Motor neuron (in vitro differentiated cells): ENCODE measurements at regions of chr9 and their contacts with region 1.

Region 1: GRCh38 chr9:110623462-110624025 is 44.0 kb upstream of the SVEP1 start:
- ATAC-seq: peak in 7 of 8 experiments; percentile 22 to 54 (median 44)
- H3K4me3 ChIP-seq: no peak overlapping the region
- H3K27ac ChIP-seq: no peak overlapping the region
- H3K4me1 ChIP-seq: peaks cover 0 to 3% of the 10 kb centered on the region in 2 donors

Region 2: DNA sequence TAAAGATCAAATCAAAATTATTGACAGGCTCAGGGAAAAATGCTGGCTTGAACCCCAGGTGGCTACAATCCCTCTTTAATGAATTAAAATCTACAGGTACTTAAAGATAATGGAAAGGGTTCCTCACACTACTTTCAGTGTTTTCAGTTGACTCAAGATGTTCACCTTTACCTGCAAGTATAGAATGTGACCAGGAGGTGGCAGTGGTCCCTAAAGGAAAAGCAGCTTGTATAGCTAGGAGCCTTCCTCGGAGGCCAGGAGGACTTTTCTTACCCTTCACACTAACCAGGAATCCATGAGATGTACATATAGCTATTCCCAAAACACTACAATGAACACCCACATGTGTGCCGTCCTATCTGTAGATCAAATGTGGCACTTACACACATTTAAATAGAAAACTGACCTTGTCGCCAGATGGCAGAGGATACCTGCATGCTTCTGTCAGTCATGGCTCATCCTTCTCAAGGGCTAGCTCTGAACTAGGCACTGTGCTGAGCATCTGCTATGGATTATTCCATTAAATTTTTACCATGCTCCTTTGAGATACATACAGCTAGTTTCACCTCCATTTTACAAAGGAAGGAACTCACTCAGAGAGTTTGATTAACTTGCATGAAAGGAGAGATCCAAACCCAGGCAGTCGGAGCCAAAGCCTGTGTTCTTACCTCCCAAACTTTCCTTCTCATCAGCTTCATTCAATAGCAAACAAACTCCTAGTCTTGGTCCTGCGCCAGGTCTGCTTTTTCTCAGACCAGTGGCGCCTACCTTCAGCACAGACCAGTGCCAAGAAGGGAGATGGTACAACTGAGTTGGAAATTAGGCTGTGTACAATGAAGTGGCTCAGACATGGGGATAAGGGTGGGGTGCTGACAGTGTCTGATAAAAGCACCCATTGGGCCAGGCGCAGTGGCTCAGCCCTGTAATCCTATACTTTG is 440.1 kb before region 1 on chr9:
- in situ Hi-C with region 1: loop called in 1 of 9 experiments (anchors 25 kb)
- ATAC-seq: peak in 6 of 8 experiments; percentile 4 to 78 (median 34)
- H3K4me3 ChIP-seq: no peak overlapping the region
- H3K27ac ChIP-seq: no peak overlapping the region
- H3K4me1 ChIP-seq: no peaks in the 10 kb centered on the region

Region 3: DNA sequence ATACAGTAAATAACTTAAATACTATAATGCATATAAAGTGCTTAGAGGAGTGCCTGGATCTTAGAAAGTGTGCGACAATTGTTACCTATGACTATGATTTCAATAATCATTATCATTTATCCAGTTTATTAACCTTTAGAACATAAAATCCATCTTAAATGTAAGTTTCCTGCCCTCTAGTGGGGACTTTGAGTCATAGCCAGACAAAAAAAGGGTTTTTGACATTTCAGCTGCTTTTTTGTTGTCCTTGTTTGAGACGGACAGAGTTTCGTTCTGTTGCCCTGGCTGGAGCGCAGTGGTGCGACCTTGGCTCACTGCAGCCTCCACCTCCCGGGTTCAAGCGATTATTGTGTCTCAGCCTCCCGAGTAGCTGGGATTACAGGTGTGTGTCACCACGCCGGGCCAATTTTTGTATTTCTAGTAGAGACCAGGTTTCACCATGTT is 405.9 kb before region 1 on chr9:
- in situ Hi-C with region 1: loop called in 1 of 9 experiments (anchors 25 kb)
- ATAC-seq: no peak
- H3K4me3 ChIP-seq: no peak overlapping the region
- H3K27ac ChIP-seq: no peak overlapping the region
- H3K4me1 ChIP-seq: no peaks in the 10 kb centered on the region

Region 4: DNA sequence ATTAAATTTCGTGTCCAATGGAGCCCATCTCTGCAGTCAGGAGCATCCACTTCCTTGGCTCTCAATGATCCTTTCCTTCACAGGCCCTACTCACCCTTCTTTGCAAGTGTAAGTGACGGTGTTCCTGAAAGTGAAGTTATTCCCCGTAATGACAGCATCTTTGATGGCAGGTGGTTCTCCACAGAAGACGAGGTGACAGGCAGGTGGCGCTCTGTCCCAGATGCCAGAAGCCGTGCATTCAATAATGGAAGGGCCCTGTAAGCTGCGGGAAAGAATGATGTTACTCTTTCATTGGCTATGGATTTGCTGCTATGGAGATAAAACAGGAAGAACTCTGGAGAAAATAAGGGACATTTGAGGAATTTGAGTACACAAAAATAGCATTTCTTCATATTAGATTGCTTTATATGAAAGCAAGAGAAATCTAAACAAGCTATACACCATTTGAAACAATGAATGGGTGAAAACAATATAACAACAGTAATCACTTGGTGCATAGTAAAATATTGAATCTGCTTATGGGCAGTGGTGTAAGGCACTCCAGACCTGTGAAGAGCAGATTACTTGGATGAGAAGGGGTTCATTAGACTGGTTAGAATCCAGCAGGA is 195.9 kb before region 1 on chr9:
- in situ Hi-C with region 1: loop called in 2 of 9 experiments (anchors 25 kb)
- ATAC-seq: peak in 4 of 8 experiments; percentile 31 to 80 (median 76)
- H3K4me3 ChIP-seq: no peak overlapping the region
- H3K27ac ChIP-seq: no peak overlapping the region
- H3K4me1 ChIP-seq: no peaks in the 10 kb centered on the region

Region 5: DNA sequence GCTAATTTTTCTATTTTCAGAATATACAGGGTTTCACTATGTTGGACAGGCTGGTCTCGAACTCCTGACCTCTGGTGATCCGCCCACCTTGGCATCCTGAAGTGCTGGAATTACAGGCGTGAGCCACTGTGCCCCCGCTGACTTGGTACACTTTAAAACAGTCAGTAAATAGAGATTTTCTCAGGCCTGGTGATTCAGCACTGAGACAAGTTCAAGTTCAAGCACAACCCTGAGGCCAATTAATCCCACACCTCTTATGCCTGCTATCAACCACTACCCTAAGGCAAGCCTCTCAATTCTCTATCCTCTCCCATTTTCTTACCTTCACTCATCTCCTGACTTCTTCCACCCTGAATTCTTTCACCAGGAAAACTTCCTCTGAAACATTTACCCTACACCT is 64.0 kb after region 1 on chr9:
- in situ Hi-C with region 1: no loop called
- ATAC-seq: no peak
- H3K4me3 ChIP-seq: no peak overlapping the region
- H3K27ac ChIP-seq: no peak overlapping the region
- H3K4me1 ChIP-seq: no peaks in the 10 kb centered on the region

Region 6: GRCh38 chr9:110869931-110870330 is 246.4 kb after region 1 on chr9:
- in situ Hi-C with region 1: no loop called
- ATAC-seq: no peak
- H3K4me3 ChIP-seq: no peak overlapping the region
- H3K27ac ChIP-seq: no peak overlapping the region
- H3K4me1 ChIP-seq: peaks cover 0 to 4% of the 10 kb centered on the region in 2 donors

Region 7: DNA sequence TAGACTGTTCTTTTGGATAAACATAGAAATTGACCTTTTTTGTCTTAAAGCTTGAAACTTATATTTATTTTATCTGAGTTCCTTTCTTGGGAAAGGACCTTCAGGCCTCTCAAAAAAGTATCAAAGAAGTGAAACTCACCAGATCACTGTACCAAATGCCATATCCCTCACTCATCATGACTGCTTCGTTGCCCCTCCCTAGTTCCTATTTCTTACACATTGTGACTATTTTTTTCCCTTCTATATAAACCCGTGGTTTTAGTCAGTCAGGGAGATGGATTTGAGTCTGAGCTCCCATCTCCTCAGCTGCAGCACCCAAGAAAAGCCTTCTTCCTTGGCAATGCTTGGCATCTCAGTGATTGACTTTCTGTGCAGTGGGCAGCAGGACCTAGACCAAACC is 285.4 kb after region 1 on chr9:
- in situ Hi-C with region 1: no loop called
- ATAC-seq: no peak
- H3K4me3 ChIP-seq: no peak overlapping the region
- H3K27ac ChIP-seq: no peak overlapping the region
- H3K4me1 ChIP-seq: no peaks in the 10 kb centered on the region

Region 8: DNA sequence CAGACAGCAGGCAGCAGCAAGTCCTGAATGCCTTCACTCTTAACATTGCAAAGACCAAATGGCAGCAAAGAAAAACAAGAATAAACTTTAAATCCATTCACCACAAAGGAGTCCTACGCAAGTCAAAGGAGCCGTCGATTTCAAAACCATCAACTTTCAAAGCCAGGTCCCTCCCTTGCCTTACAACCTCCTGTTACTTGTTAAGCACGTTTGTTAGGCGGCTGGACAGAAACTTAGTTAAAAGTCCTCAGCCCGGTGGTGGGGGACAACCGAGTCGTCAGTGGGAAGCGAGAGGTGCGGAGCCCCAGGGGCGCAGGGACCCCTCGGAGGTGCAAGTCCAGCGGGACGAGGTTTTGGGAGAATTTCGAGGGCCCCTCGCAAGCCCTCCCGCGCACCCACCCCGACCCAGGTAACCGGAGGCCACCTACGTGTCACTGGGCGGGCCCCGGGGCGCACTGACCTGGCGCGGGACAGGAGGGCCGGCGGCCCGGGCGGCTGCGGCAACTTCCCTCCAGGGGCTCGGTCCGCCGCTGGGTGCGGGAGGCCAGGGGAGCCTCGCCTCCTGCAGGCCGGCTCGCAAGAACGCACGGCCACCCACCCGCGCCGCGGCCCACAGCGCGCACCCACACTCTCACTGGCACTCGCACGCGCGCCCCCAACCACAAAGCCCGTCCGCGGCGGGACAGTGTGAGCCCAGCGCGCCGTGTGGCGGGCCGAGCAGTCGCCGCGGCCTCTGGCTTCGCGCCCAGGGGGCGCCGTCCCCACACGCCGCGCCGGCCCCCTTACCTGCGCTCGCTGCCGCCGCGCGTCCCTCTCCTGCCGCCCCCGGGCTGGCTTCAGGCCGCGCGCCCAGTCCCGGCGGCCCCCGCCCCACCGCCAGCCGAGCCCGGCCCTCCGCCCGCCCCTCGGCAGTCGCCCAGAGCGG is 414.1 kb after region 1 on chr9:
- in situ Hi-C with region 1: loop called in 1 of 9 experiments (anchors 25 kb)
- ATAC-seq: peak; percentile 16 to 90 (median 86)
- H3K4me3 ChIP-seq: peak overlapping the region; percentile 41 to 57 (median 50)
- H3K27ac ChIP-seq: no peak overlapping the region
- H3K4me1 ChIP-seq: peaks cover 4 to 14% of the 10 kb centered on the region in 2 donors

Region 9: DNA sequence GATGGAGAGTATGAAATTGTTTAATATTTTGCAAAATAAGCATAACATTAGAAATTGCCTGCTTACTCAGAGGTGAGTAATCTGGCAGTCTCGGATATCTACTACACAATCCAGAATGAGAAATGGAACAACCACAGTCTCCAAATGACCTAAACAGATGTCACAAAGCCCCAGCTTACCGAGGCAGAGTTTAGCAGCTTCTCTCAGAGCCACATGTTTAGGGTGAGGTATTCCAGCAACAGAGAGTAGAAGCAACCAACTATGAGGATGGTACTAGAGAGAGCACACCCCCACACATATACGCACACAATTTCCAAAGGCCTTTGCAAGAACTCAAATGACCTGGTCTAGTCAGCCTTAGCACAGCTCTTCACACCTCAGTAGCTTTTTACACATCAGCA is 537.5 kb after region 1 on chr9:
- in situ Hi-C with region 1: loop called in 1 of 9 experiments (anchors 25 kb)
- ATAC-seq: no peak
- H3K4me3 ChIP-seq: no peak overlapping the region
- H3K27ac ChIP-seq: no peak overlapping the region
- H3K4me1 ChIP-seq: peaks cover 0 to 4% of the 10 kb centered on the region in 2 donors

Region 10: DNA sequence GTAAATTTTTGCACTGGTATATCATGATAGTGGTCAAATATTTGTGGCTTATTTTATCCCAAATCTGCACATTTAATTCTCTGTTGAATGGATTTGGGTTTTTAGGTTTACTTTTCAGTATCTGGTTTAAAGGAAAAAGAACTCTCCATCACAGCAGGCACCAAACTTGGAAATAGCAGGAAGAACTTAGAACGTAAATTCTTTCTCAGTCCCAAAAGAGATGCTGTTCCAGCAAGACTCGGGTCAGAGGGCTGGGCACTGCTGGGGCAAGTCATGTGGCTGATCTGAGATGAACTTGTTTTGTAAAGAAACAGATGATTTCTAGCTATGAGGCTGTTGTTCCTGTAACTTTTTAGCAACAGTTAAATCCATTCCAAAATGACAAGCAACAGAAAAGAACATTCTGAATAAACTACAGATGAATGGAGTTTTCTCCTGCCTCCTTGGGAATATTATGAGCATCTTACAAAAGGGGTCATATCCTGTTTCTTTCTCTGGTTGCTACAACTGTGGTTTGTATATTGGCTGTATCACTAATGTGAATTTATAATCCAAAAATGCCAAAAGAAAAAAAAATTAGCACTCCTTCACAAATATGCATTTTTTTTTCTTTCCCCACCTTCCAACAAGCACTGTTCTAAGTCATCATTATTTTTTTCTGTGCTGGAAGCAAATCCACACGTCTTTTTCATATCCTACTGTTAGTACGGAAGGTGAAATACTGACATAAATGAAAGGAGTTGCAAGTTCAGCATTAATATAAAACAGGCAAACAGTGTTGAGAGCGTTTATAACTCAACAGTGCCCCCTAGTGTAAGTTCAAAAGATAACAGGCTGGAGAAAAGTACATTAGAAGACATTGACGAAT is 675.4 kb after region 1 on chr9:
- in situ Hi-C with region 1: loop called in 1 of 9 experiments (anchors 25 kb)
- ATAC-seq: peak in 7 of 8 experiments; percentile 42 to 91 (median 63)
- H3K4me3 ChIP-seq: no peak overlapping the region
- H3K27ac ChIP-seq: no peak overlapping the region
- H3K4me1 ChIP-seq: peaks cover 0 to 3% of the 10 kb centered on the region in 2 donors